HCT116 (cell line): ENCODE measurements at regions of chr6 and their contacts with region 1.

Region 1: GRCh38 chr6:54970337-54970736 is 123.8 kb downstream of the FAM83B start:
- DNase-seq: peak; percentile 94
- ATAC-seq: peak; percentile 91
- H3K4me3 ChIP-seq: 0 out of 4 replicates have a peak overlapping the region, but pooled peaks of 1 of the 2 experiments have one; percentile 2
- H3K27ac ChIP-seq: peak overlapping the region; percentile 40
- H3K4me1 ChIP-seq: peaks cover 20 to 32% of the 10 kb centered on the region in 2 experiments; a peak in 3 of 4 replicates
- H3K27me3 ChIP-seq: no peaks in the 10 kb centered on the region
- CTCF ChIP-seq: no peak
- POLR2A ChIP-seq: no peak
- RAD21 ChIP-seq: peak; percentile 35

Region 2: DNA sequence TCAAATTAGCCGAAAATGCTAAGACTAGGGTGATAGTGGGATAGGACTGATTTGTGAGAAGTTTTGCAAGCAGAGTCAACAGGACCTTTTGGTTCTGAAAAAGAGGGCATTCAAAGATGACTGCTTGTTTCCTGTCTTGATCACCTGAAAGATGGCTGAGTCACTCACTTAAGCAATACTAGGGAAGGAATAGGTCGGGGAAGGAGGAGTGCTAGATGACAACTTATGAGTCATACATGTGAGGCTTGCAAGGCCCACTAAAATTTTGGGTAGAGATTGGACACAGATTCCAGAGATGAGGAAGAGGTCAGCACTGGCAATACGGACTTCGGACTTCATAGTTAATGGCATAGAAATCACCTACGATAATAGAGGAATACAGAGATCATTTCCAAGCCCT is 34.6 kb before region 1 on chr6:
- CTCF ChIA-PET with region 1: no interaction called
- POLR2A ChIA-PET with region 1: no interaction called
- RAD21 ChIA-PET with region 1: no interaction called
- intact Hi-C with region 1: loop called (anchors 1 kb)
- DNase-seq: peak; percentile 94
- ATAC-seq: peak; percentile 99
- H3K4me3 ChIP-seq: peak overlapping the region in 1 of 2 experiments; percentile 27; a peak in 2 of 4 replicates
- H3K27ac ChIP-seq: peak overlapping the region; percentile 59
- H3K4me1 ChIP-seq: peaks cover 7 to 24% of the 10 kb centered on the region in 2 experiments; a peak in 3 of 4 replicates
- H3K27me3 ChIP-seq: no peaks in the 10 kb centered on the region
- CTCF ChIP-seq: no peak
- POLR2A ChIP-seq: no peak
- RAD21 ChIP-seq: peak; percentile 22